IMR-90 (cell line): ENCODE measurements at regions of chr12 and their contacts with region 1.

Region 1: DNA sequence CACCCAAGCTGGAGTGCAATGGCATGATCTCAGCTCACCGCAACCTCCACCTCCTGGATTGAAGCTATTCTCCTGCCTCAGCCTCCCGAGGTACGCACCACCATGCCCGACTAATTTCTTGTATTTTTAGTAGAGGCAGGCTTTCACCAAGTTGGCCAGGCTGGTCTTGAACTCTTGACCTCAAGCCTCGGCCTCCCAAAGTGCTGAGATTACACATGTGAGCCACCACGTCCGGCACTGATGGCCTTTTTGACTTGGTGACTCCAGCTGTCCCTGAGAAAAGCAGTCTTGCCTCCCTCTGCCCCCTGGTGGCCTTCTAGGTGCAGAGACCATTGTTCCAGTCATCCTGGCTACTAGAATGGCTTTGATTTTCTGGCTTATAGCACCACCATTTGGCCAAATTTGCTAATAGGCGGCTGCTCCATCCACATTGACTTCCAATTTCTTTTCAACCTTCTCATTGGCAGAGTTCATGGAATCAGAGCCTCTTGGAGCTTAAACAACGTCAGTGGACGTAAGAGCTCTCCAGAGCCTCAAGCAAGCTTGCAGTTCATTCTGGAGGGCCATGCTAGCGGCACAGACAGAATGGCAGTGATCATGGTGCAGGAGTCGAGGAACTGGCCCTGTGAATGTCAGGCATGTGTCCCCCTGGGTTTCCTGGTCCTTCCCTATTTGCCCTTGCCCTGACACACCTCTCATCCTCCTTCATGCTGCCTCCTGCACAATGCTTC is 25.4 kb upstream of the EIF4B start:
- DNase-seq: peak; percentile 88
- ATAC-seq: peak; percentile 83
- H3K4me3 ChIP-seq: no peak overlapping the region
- H3K27ac ChIP-seq: no peak overlapping the region
- H3K4me1 ChIP-seq: peaks cover 9% of the 10 kb centered on the region
- H3K27me3 ChIP-seq: peaks cover 5% of the 10 kb centered on the region
- CTCF ChIP-seq: peak; percentile 100; the same call in 1 of the 2 replicates
- POLR2A ChIP-seq: peak; percentile 53; the same call in 1 of the 2 replicates
- RAD21 ChIP-seq: peak; percentile 100

Region 2: GRCh38 chr12:52147367-52147972 is 833.4 kb before region 1 on chr12:
- CTCF ChIA-PET with region 1: no interaction called
- POLR2A ChIA-PET with region 1: no interaction called
- dilution Hi-C with region 1: no loop called
- in situ Hi-C with region 1: loop called (anchors 10 kb)
- intact Hi-C with region 1: loop called (anchors 5 kb)
- DNase-seq: peak; percentile 99
- ATAC-seq: peak; percentile 85
- H3K4me3 ChIP-seq: no peak overlapping the region
- H3K27ac ChIP-seq: peak overlapping the region; percentile 97
- H3K4me1 ChIP-seq: peaks cover 43% of the 10 kb centered on the region
- H3K27me3 ChIP-seq: no peaks in the 10 kb centered on the region
- CTCF ChIP-seq: no peak
- POLR2A ChIP-seq: peak; percentile 31; the same call in 1 of the 2 replicates
- RAD21 ChIP-seq: peak; percentile 15; the same call in 1 of the 2 replicates

Region 3: GRCh38 chr12:52372216-52373154 is 608.4 kb before region 1 on chr12:
- CTCF ChIA-PET with region 1: no interaction called
- POLR2A ChIA-PET with region 1: no interaction called
- dilution Hi-C with region 1: no loop called
- in situ Hi-C with region 1: loop called (anchors 10 kb)
- intact Hi-C with region 1: loop called (anchors 5 kb)
- DNase-seq: peak; percentile 81
- ATAC-seq: peak; percentile 94
- H3K4me3 ChIP-seq: no peak overlapping the region
- H3K27ac ChIP-seq: no peak overlapping the region
- H3K4me1 ChIP-seq: no peaks in the 10 kb centered on the region
- H3K27me3 ChIP-seq: peaks cover 36% of the 10 kb centered on the region
- CTCF ChIP-seq: peak; percentile 93
- POLR2A ChIP-seq: no peak
- RAD21 ChIP-seq: peak; percentile 92

Region 4: GRCh38 chr12:52452101-52452500 is 528.8 kb before region 1 on chr12 and contains the start of gene KRT6B:
- CTCF ChIA-PET with region 1: no interaction called
- POLR2A ChIA-PET with region 1: no interaction called
- dilution Hi-C with region 1: no loop called
- in situ Hi-C with region 1: no loop called
- intact Hi-C with region 1: no loop called
- DNase-seq: no peak
- ATAC-seq: no peak
- H3K4me3 ChIP-seq: no peak within 1 kb of the TSS
- H3K27ac ChIP-seq: no peak within 1 kb of the TSS
- H3K4me1 ChIP-seq: no peaks in the 10 kb centered on the region
- H3K27me3 ChIP-seq: peaks cover 9% of the 10 kb centered on the region; the same call in 1 of the 2 replicates
- CTCF ChIP-seq: no peak
- POLR2A ChIP-seq: no peak
- RAD21 ChIP-seq: no peak
- total RNA-seq, gene KRT6B: not detected in 2 replicates

Region 5: DNA sequence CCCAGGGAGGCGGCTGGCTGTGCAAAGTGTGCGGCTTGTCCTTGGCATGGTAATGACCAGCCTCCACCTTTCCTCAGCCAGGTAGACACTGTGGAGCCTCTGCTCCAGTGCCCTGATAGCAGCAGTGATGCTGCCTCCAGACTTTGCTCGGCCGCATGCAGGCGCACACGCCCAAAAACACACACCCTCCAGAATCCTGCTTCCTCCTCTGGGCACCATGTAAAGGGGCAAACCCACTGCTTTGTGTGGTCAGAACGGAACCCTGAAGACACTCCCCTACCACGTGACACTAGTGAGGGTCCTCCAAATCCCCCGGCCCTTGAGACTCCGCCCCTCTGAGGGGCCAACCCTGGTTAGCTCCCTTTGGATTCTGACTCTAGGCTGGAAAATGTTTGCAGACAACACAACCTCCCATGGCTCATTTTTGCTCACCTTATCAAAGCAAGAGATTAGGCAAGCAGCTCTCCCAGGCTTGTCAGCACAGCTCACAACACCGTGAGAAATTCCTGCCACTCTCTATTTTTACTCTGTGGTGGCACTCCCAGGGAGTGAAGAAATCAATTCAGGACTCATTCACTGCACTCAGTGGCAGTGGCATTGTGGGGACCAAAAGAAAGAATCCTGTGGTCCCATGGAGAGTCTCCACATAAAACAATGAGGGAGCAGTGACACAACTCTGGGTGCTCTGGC is 282.1 kb before region 1 on chr12:
- CTCF ChIA-PET with region 1: no interaction called
- POLR2A ChIA-PET with region 1: no interaction called
- dilution Hi-C with region 1: no loop called
- in situ Hi-C with region 1: no loop called
- intact Hi-C with region 1: no loop called
- DNase-seq: no peak
- ATAC-seq: no peak
- H3K4me3 ChIP-seq: no peak overlapping the region
- H3K27ac ChIP-seq: no peak overlapping the region
- H3K4me1 ChIP-seq: no peaks in the 10 kb centered on the region
- H3K27me3 ChIP-seq: peaks cover 30% of the 10 kb centered on the region
- CTCF ChIP-seq: no peak
- POLR2A ChIP-seq: no peak
- RAD21 ChIP-seq: no peak

Region 6: DNA sequence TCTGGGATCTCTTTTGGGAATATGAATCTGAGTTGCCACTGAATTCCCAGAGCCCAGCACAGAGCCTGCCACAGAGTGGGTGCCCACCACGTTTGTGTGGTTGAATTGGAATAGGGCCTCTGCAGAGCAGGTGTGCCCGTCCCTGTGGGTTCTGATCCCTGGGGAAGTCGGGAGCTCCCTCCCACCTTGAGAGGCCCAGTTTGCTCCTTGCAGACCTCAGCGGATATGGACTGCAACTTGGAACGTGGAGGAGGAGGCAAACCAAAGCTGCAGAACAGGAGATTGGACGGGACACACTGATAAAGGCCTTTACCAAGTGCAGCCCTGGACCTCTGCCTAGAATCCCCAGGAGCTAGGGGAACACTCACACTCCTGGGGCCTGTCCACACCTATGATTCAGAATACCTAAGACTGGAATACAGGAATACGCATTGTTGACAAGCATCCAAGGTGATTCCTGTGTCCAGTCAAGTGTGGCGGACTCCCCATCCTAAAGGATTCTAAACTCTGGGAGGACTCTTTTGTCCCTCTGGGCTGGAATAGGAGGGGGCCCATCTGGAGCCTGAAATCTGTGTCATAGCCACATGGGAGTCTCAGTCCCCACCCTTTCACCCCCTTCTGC is 206.1 kb before region 1 on chr12:
- CTCF ChIA-PET with region 1: no interaction called
- POLR2A ChIA-PET with region 1: no interaction called
- dilution Hi-C with region 1: no loop called
- in situ Hi-C with region 1: no loop called
- intact Hi-C with region 1: no loop called
- DNase-seq: no peak
- ATAC-seq: no peak
- H3K4me3 ChIP-seq: no peak overlapping the region
- H3K27ac ChIP-seq: no peak overlapping the region
- H3K4me1 ChIP-seq: no peaks in the 10 kb centered on the region
- H3K27me3 ChIP-seq: peaks cover 32% of the 10 kb centered on the region
- CTCF ChIP-seq: no peak
- POLR2A ChIP-seq: no peak
- RAD21 ChIP-seq: no peak

Region 7: DNA sequence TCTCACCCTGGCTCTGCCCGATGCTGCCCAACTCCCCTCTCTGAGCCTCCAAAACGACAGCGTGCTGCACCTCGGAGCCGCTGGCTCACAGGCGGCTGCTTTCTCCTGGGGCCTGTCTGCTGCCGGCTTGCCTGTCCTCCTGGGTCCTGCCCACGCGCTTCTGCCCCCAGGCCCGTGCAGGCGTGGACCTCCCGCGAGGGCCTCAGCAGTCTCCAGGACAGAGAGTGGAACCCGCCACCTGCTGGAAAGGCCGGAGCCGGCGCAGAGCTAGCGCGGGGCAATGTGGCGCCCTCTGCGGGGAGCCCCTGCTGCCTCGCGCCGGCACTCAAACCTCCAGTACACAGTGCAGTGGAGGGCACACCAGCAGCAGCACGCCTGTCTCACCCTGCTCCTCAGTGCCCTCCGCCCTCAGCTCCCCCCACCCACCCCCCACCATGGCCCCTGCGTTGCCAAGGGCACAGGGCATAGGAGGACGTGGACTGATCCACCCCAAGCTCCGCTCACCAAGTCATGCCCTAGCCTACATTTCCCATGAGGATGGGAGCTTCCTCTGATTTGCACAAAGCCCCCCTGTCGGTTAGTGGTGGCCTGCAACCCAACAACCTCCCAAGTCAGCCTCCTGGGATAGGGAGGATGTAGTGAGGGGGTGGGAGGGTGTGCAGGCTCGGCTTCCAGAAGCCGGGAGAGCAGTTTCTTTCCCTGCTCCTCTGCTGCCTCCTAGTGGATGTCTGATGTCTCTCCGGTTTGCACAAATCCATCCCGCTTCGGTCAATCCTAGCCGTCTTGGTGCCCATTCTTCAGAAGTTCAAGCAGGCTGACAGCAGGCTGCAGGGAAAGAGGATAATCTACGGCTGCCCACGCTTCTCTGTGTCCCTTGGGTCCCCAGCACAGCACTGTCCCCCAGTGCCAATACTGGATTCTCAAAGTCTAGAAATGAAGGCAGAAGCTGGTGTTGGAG is 101.2 kb before region 1 on chr12:
- CTCF ChIA-PET with region 1: interaction called, 130 read pairs
- POLR2A ChIA-PET with region 1: interaction called, 4 read pairs
- dilution Hi-C with region 1: loop called (anchors 25 kb)
- in situ Hi-C with region 1: no loop called
- intact Hi-C with region 1: no loop called
- DNase-seq: peak; percentile 86
- ATAC-seq: peak; percentile 94
- H3K4me3 ChIP-seq: no peak overlapping the region
- H3K27ac ChIP-seq: no peak overlapping the region
- H3K4me1 ChIP-seq: peaks cover 3% of the 10 kb centered on the region
- H3K27me3 ChIP-seq: no peaks in the 10 kb centered on the region
- CTCF ChIP-seq: peak; percentile 98
- POLR2A ChIP-seq: peak; percentile 52
- RAD21 ChIP-seq: peak; percentile 97

Region 8: GRCh38 chr12:52890417-52890816 is 90.4 kb before region 1 on chr12:
- CTCF ChIA-PET with region 1: interaction called, 130 read pairs
- POLR2A ChIA-PET with region 1: interaction called, 4 read pairs
- dilution Hi-C with region 1: loop called (anchors 25 kb)
- in situ Hi-C with region 1: loop called (anchors 5 kb)
- intact Hi-C with region 1: loop called (anchors 1 kb)
- DNase-seq: no peak
- ATAC-seq: no peak
- H3K4me3 ChIP-seq: no peak overlapping the region
- H3K27ac ChIP-seq: no peak overlapping the region
- H3K4me1 ChIP-seq: no peaks in the 10 kb centered on the region
- H3K27me3 ChIP-seq: no peaks in the 10 kb centered on the region; the same call in 1 of the 2 replicates
- CTCF ChIP-seq: no peak
- POLR2A ChIP-seq: no peak
- RAD21 ChIP-seq: no peak